ENCODE measurements at regions of chr1 and their contacts with region 1.

Region 1: DNA sequence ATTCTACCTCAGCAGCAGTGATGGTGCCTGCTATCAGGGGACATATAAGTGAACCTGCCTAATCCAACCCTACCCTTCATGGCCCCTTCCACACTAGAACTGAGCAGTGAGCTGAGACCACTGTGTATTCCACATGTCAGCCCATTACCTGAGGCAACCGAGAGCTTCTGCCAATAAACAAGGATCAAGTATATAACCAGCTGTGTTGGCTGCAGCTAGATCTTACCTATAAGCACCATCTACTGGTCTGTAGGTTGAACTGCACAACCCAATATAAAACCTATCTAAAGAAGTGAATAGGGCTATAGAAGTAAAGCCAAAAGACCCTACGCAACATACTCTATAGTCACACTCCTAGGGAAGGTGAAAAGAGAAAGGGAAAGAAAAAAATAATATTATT is 376.9 kb downstream of the HHIPL2 start:
- DNase-seq: no peak

Region 2: GRCh38 chr1:222136869-222137268 is 34.1 kb before region 1 on chr1:
- intact Hi-C with region 1: no loop called
- DNase-seq: no peak

Region 3: GRCh38 chr1:222229672-222230312 is 58.8 kb after region 1 on chr1:
- intact Hi-C with region 1: loop called in 1 of 2 experiments (anchors 2 kb)
- DNase-seq: no peak